ENCODE measurements at regions of chr1 and their contacts with region 1.

Region 1: DNA sequence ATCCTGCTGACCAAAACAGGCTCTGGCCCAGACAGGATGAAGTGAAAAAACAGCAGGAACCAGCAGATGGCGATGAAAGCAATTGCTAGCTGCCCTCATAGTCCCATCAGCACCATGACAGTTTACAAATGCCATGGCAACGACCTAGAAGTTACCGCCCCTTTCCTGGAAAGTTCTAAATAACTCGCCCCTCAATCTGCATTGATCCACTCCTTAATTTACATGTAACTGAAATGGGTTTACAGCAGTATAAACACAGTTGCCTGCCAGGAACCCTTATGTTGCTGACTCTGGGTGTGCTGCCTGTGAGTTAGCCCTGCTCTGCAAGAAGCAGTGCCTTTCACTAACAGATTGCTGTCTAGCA is 65.5 kb upstream of the CR1L start:
- DNase-seq: peak; percentile 77
- H3K4me3 Mint-ChIP-seq: no peak overlapping the region
- H3K27ac Mint-ChIP-seq: no peak overlapping the region
- H3K4me1 Mint-ChIP-seq: peaks cover 5% of the 10 kb centered on the region
- H3K27me3 Mint-ChIP-seq: peaks cover 23% of the 10 kb centered on the region
- CTCF ChIP-seq: peak; percentile 57

Region 2: DNA sequence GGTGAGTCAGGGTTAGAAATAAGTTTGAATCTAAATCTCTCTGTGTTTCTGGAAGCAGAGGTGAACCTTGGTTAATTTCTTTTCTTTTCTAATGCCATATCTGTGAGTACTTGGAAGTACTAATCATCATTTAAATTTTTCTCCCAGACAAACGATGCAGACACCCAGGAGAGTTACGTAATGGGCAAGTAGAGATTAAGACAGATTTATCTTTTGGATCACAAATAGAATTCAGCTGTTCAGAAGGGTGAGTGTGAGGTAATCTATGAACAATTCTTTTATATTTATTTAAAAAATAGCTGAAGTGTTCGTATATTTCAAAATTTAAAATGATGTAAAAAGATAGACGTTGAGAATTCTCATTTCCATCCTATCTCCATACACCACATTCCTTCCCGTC is 464.1 kb before region 1 on chr1:
- CTCF ChIA-PET with region 1: no interaction called
- intact Hi-C with region 1: no loop called
- DNase-seq: no peak
- H3K4me3 Mint-ChIP-seq: no peak overlapping the region
- H3K27ac Mint-ChIP-seq: no peak overlapping the region
- H3K4me1 Mint-ChIP-seq: no peaks in the 10 kb centered on the region
- H3K27me3 Mint-ChIP-seq: no peaks in the 10 kb centered on the region
- CTCF ChIP-seq: no peak

Region 3: DNA sequence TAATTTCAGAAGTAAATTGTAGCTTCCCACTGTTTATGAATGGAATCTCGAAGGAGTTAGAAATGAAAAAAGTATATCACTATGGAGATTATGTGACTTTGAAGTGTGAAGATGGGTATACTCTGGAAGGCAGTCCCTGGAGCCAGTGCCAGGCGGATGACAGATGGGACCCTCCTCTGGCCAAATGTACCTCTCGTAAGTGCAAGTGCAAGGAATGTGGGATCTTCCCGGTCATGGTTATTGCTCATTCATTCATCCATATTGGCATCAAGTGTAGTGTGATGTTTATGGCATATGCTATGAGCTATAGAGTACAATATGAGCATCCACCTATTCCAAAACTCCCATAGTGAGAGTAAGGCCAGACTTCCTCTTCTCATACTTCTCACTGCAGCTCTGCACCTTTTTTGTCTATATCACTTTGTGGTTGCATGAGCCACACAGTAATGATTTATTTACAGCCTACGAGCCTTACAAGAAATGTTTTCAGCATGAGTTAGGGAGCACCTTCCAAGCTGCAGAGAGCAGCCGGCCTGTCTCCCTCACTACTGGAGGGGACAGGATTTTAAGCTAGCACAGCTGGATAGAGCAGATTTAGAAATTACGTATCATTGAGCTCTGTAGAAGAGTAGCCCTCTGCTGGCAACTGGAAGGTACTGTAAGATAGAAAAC is 40.6 kb after region 1 on chr1:
- CTCF ChIA-PET with region 1: interaction called, 28 read pairs
- intact Hi-C with region 1: loop called (anchors 1 kb)
- DNase-seq: peak; percentile 38
- H3K4me3 Mint-ChIP-seq: no peak overlapping the region
- H3K27ac Mint-ChIP-seq: no peak overlapping the region
- H3K4me1 Mint-ChIP-seq: no peaks in the 10 kb centered on the region
- H3K27me3 Mint-ChIP-seq: peaks cover 31% of the 10 kb centered on the region
- CTCF ChIP-seq: peak; percentile 41

Region 4: DNA sequence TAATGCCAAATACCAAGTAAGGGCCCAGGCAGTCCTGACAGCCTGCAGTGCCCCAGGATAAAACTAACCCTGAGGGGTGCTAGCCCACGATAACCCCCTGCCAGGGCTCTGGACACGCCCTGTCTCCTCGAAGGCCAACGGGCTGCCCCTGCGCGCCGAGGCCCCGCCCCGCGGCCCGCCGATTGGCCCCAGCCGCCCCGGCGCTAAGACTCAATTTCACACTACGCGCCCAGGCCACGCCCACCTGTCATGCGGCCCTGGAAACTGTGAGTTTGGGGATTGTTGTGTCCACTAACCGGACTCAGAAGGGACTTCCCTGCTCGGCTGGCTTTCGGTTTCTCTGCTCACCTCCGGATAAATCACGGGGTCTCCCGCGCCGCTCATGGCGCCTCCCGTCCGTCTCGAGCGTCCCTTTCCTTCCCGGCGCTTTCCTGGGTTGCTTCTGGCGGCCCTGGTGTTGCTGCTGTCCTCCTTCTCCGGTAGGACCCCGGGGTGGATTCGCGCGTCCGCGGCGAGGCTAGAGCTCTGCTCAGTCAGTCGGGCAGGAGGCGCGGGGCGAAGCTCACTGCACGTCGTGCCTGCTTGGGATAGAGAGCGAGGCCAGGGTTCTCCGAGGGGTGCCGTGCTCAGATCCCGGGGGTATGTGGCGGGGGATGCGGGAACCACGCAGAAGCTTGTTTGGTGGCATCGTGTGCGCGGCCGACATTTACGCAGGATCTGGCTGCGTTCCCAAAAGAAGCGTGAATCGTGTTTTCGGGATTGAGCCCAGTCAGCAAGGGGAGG is 65.6 kb after region 1 on chr1 and contains the start of gene CR1L:
- CTCF ChIA-PET with region 1: no interaction called
- intact Hi-C with region 1: no loop called
- DNase-seq: peak; percentile 91
- H3K4me3 Mint-ChIP-seq: peak within 1 kb of the TSS; percentile 74
- H3K27ac Mint-ChIP-seq: no peak within 1 kb of the TSS
- H3K4me1 Mint-ChIP-seq: peaks cover 21% of the 10 kb centered on the region
- H3K27me3 Mint-ChIP-seq: peaks cover 35% of the 10 kb centered on the region
- CTCF ChIP-seq: no peak
- total RNA-seq, gene CR1L: not detected in 2 replicates

Region 5: GRCh38 chr1:207672522-207673130 is 93.2 kb after region 1 on chr1:
- CTCF ChIA-PET with region 1: interaction called, 19 read pairs
- intact Hi-C with region 1: loop called (anchors 1 kb)
- DNase-seq: peak; percentile 53
- H3K4me3 Mint-ChIP-seq: no peak overlapping the region
- H3K27ac Mint-ChIP-seq: no peak overlapping the region
- H3K4me1 Mint-ChIP-seq: peaks cover 11% of the 10 kb centered on the region
- H3K27me3 Mint-ChIP-seq: peaks cover 34% of the 10 kb centered on the region
- CTCF ChIP-seq: peak; percentile 49

Measured in Calu3 (cell line).